Ascending aorta (tissue), 2 donors: ENCODE measurements at regions of chr10 and their contacts with region 1.

Region 1: DNA sequence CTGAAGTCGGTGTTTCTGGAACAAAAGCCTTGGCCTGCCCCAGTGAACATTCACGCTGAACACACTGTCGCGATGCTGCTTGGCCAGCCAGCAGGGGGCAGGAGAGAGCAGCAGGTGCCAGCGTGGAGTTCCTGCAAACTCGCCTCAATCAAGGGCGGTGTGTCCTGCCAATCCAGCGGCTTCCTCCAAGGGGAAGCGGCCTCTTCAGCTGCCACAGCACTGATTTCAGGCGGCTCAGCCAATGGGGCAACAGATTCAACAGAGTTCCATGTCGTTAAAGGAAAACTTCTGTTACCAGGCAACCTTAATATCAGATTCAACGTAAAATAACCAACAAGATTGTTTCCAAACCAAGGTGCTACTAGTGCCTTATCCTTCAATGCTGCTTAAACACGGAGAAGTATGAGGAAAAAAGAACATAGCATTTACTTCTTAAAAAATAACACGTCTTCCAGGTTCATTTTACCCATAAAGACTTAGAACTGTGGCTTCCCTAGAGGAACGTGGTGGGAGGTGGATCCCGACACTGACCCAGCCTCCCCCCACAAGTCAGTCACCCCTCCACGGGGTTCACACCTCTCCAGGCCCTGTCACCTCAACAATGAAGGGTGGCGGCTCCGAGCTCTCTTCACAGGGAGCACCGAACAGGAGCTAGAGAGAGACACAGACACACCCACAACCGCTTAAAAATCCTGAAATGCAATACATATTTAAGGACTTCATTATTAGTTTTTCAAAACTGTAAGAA is 178.2 kb downstream of the DIP2C start:
- DNase-seq: peak; percentile 65 to 95
- H3K4me3 ChIP-seq: no peak overlapping the region
- H3K27ac ChIP-seq: peak overlapping the region; percentile 17 to 19
- H3K4me1 ChIP-seq: peaks cover 3 to 8% of the 10 kb centered on the region in 2 donors
- H3K27me3 ChIP-seq: no peaks in the 10 kb centered on the region
- CTCF ChIP-seq: peak; percentile 93 to 96 (median 96)

Region 2: GRCh38 chr10:178208-178607 is 333.1 kb before region 1 on chr10:
- intact Hi-C with region 1: loop called (anchors 5 kb)
- DNase-seq: no peak
- H3K4me3 ChIP-seq: no peak overlapping the region
- H3K27ac ChIP-seq: no peak overlapping the region
- H3K4me1 ChIP-seq: peaks cover 0 to 2% of the 10 kb centered on the region in 2 donors
- H3K27me3 ChIP-seq: no peaks in the 10 kb centered on the region
- CTCF ChIP-seq: peak in 1 of 3 experiments; percentile 47

Region 3: GRCh38 chr10:665579-666091 is 154.4 kb after region 1 on chr10:
- intact Hi-C with region 1: loop called (anchors 5 kb)
- DNase-seq: peak in 1 of 2 donors; percentile 80
- H3K4me3 ChIP-seq: peak overlapping the region; percentile 39 to 62
- H3K27ac ChIP-seq: peak overlapping the region; percentile 61 to 65
- H3K4me1 ChIP-seq: peaks cover 0 to 21% of the 10 kb centered on the region in 2 donors
- H3K27me3 ChIP-seq: no peaks in the 10 kb centered on the region
- CTCF ChIP-seq: no peak

Region 4: DNA sequence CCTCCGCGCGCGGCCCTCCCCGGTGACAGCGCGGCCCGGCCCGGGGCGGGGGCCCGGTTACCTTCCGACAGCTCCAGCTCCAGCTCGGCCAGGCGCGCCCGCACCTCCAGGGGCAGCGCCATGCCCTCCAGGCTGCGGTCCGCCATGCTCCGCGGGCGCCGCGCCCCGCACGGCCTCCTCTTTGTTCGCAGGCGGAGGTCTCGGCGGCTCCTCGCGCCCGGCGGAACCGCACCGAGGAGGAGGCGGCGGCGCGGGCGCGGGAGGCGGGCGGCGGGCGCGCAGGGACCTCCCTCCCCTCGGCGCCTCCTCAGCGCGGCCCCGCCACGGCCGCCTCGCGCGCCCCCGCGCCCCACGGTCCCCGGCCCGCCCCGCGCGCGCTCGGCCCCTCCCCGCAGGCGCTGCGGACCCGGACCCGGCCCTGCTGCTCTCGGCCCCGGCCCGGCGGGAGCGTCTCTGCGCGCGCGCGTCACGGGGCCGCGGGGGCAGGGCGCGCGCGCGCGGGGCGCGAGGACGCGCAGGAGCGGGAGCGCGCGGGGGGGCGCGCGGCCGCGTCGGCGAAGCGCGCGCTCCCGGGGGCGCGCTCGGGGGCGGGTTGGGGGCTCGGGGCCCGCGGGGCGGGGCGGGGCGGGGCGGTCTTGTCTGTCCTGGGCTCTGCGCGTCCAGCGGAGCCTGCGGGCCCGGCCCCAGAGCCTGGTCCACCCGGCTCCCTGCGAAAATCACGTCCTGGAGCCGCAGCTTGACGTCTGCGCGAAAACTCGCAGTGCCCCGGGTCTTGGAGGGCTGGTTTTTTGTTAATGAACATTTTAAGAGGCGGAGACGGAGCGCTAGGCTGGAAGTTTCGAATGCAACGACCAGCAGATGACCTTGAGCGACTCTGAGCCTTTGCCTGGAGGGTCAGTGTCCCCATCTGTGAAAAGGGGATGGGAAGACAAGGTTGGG is 178.4 kb after region 1 on chr10 and contains the start of gene DIP2C:
- intact Hi-C with region 1: loop called (anchors 1 kb)
- DNase-seq: peak in 1 of 2 donors; percentile 83
- H3K4me3 ChIP-seq: peak within 1 kb of the TSS; percentile 67 to 89
- H3K27ac ChIP-seq: peak within 1 kb of the TSS; percentile 89 to 91
- H3K4me1 ChIP-seq: peaks cover 6 to 11% of the 10 kb centered on the region in 2 donors
- H3K27me3 ChIP-seq: no peaks in the 10 kb centered on the region
- CTCF ChIP-seq: no peak
- total RNA-seq, gene DIP2C: 14.7 TPM

Region 5: DNA sequence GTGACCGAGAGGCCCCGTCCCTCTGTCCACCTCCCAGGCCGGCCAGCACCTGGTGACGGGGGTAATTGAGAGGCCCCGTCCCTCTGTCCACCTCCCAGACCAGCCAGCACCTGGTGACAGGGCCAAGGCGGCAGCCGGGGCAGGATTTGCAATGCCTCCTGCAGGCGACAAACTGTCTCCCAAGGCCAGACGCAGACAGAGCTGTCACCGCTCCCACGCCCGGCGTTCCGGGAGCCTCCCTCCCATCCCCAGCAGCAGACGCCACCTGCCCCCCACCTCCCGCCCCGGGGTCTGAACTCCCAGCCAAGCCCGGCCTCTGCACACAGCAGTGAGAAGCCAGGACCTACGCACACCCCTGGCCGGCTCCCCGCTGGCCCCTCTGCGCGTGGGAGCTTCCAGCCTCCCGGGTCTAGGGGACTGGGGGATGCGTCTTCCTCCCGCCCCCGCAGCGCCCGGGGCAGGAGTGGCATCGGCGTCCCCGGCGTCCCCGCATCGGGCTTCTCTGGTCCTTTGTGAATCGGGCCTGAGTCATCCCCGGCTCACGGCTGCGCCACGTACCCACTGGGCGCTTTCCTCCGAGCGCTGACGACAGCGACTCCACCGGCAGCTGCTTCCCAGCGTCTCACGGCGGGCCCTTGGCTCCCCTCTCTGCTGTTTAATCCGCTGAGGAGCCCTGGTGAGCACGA is 273.3 kb after region 1 on chr10:
- intact Hi-C with region 1: loop called (anchors 1 kb)
- DNase-seq: peak in 1 of 2 donors; percentile 84
- H3K4me3 ChIP-seq: peak overlapping the region; percentile 42 to 64
- H3K27ac ChIP-seq: no peak overlapping the region
- H3K4me1 ChIP-seq: peaks cover 2 to 3% of the 10 kb centered on the region in 2 donors
- H3K27me3 ChIP-seq: no peaks in the 10 kb centered on the region
- CTCF ChIP-seq: peak in 2 of 3 experiments; percentile 28 to 39

Region 6: DNA sequence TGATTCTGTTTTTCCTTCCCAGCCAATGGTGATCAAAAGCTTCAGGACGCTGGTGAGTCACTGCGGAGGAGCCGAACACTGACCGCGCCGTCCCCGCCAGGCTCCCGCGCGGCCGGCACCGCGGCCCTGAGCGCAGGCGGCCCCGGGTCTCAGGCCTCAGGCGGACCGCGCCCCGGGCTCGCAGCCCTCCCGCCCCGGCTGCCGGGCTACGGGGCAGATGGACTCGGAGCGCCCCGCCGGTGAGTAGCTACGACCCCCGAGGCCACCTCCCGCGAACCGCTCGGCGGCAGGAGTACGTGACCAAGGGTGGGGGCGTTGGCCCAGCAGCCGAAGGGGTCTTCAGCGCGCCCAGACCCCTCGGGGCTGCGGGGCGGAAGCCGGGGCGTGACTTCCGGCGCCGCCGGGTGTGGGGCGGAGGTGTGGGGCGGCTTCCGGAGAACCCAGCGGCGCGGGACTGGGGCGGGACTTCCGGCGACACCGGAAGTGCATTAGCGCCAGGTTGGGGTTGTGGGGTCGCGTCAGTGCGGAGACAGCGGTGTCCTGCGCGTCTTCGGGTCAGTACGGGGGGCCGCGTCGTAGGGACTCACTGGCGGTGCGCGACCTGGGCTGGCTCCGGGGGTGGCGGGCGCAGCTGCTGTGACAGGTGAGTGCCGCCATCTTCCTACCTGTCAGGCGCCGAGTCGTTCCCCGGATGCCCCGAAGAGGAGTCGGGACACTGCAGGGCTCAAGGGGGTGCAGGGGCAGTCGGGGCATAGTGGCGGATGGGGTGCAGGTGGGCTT is 545.2 kb after region 1 on chr10 and contains the start of gene WDR37:
- intact Hi-C with region 1: loop called (anchors 5 kb)
- DNase-seq: peak in 1 of 2 donors; percentile 91
- H3K4me3 ChIP-seq: peak within 1 kb of the TSS; percentile 76 to 95
- H3K27ac ChIP-seq: peak within 1 kb of the TSS; percentile 97 to 100
- H3K4me1 ChIP-seq: peaks cover 6 to 12% of the 10 kb centered on the region in 2 donors
- H3K27me3 ChIP-seq: no peaks in the 10 kb centered on the region
- CTCF ChIP-seq: no peak
- total RNA-seq, gene WDR37: 4.4 TPM